ENCODE measurements at regions of chr5 and their contacts with region 1.

Region 1: GRCh38 chr5:162174358-162174974 is 106.9 kb downstream of the GABRG2 start:
- DNase-seq: no peak
- H3K4me3 Mint-ChIP-seq: no peak overlapping the region
- H3K27ac Mint-ChIP-seq: no peak overlapping the region
- H3K4me1 Mint-ChIP-seq: no peaks in the 10 kb centered on the region
- H3K27me3 Mint-ChIP-seq: no peaks in the 10 kb centered on the region

Region 2: DNA sequence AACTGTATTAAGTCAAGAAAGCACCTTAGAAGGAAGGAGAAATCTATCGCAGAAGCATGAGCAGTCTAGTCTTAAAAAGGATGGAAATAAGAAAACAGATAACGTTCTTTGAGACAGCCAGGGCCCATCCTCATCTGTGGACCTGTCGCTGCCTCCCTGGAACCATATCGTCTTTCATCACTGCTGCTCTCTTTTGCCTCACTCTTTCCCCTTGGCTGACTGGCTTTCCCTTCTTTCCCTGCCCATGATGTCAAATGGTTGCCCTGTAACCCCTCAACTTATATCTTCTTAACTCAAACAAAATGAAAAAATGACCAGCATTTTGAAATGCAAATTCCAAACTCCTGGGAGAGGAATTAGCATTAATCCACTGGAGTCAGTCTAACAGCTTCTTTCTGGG is 927.7 kb before region 1 on chr5:
- intact Hi-C with region 1: no loop called
- DNase-seq: no peak
- H3K4me3 Mint-ChIP-seq: no peak overlapping the region
- H3K27ac Mint-ChIP-seq: no peak overlapping the region
- H3K4me1 Mint-ChIP-seq: no peaks in the 10 kb centered on the region
- H3K27me3 Mint-ChIP-seq: no peaks in the 10 kb centered on the region

Region 3: GRCh38 chr5:162139190-162139589 is 35.3 kb before region 1 on chr5:
- intact Hi-C with region 1: no loop called
- DNase-seq: no peak
- H3K4me3 Mint-ChIP-seq: no peak overlapping the region
- H3K27ac Mint-ChIP-seq: no peak overlapping the region
- H3K4me1 Mint-ChIP-seq: no peaks in the 10 kb centered on the region
- H3K27me3 Mint-ChIP-seq: no peaks in the 10 kb centered on the region

Region 4: DNA sequence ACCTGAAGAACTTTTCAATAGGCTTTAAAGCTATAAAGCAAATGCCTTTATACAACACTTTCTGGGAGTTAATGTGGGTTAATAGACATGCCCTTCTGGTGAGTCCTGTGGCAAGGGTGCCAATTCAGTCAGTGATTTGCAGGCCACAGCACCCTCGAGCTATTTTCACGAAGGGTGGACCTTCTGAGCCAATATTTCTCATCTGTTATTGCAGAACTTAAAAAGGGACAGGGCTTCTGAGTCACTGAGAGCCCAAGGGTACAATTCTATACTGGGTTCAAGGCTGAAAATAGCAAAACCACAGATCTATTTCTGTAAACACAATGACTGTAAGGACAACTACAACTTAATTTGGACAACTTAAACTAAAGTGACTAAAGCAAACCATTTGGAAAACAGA is 14.1 kb before region 1 on chr5:
- intact Hi-C with region 1: loop called (anchors 1 kb)
- DNase-seq: no peak
- H3K4me3 Mint-ChIP-seq: no peak overlapping the region
- H3K27ac Mint-ChIP-seq: no peak overlapping the region
- H3K4me1 Mint-ChIP-seq: no peaks in the 10 kb centered on the region
- H3K27me3 Mint-ChIP-seq: no peaks in the 10 kb centered on the region